Activated naive CD4-positive, alpha-beta T cell treated with anti-CD3 and anti-CD28 coated beads for 36 hours (primary cell): ENCODE measurements at regions of chr6 and their contacts with region 1.

Region 1: GRCh38 chr6:15184441-15184861 is 61.4 kb upstream of the JARID2 start:
- DNase-seq: peak; percentile 78
- H3K4me3 Mint-ChIP-seq: no peak overlapping the region
- H3K27ac Mint-ChIP-seq: peak overlapping the region; percentile 99
- H3K4me1 Mint-ChIP-seq: peaks cover 25% of the 10 kb centered on the region
- H3K27me3 Mint-ChIP-seq: no peaks in the 10 kb centered on the region

Region 2: DNA sequence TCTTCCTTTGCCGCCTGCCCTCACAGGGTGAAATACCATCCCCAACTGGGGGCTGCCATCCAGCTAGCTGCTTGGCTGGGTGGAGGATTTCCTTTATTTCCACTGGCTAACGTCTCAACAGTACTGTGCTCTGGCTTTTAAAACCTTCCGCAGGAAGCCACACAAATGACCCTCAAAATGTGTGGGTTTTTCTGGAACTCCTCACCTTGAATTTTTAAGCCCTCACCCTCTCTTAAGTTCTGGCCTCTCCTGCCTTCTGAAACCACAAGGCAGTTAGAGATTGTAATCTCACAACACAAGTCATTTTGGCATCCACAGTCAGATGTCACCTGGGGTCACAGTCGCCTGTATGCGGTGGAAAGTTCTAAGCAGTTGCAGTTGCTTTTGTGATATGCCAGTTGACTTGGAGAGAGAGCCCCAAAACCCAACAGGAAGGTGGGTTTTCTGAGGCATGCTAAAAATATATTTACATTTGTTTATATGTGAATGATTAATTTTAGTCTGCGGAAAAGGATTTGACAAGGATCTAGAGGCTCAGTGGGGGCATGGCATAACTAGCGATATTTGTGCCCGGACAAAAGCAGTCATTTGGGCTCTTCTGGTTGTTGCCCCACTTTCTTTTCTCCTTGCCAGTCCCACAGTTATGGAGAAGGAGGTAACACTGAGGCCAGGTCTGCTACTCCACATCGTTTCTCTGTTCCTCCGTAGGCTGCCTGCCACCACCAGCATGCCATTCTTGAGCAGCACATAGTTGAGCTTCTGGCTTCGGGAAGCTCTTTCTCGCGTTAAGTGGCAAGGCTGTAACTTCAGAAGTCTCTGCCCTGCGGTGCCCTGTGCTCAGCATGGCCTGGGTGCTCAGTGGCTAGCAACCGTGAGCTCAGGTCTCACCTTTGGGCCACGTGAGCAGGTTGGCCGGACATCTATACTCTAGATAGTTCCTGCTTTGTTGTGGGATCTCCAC is 731.6 kb before region 1 on chr6:
- CTCF ChIA-PET with region 1: no interaction called
- intact Hi-C with region 1: loop called (anchors 1 kb)
- DNase-seq: peak; percentile 79
- H3K4me3 Mint-ChIP-seq: no peak overlapping the region
- H3K27ac Mint-ChIP-seq: no peak overlapping the region
- H3K4me1 Mint-ChIP-seq: peaks cover 53% of the 10 kb centered on the region
- H3K27me3 Mint-ChIP-seq: peaks cover 1% of the 10 kb centered on the region

Region 3: DNA sequence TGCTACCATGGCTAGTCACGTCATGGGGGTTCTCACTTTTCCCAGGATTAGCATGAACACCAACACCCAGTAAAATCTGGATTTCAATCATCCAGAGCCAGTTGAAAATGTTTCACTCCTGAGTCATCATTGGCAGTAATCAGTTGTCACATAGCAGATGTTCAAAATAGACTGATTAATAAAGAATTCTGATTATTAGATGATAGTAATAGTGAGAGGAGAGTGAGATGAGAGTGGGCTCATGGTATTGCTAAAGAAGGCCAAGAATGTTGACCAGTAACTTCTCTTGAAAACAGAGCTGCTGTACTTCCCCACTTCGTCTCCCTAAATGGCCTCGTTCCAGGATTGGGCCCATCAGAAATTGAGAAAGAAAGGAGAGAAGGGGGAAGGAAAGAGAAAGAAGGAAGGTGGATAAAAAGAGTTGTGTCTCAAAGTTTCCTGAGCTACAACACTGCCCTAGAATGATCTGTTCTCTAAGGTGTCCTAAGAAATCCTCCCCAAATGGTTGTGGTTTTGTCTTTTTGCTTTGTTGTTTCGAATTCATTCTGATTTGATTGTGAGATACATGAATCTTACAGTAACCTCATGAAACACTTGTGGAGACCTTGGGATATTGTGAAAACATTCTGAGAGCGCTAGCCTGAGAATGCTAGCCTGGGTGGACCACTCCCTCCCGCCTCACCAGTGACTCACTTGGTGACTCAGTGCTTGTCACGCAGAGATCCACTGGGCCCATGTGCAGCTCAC is 440.8 kb before region 1 on chr6:
- CTCF ChIA-PET with region 1: no interaction called
- intact Hi-C with region 1: loop called (anchors 1 kb)
- DNase-seq: peak; percentile 92
- H3K4me3 Mint-ChIP-seq: no peak overlapping the region
- H3K27ac Mint-ChIP-seq: peak overlapping the region; percentile 98
- H3K4me1 Mint-ChIP-seq: peaks cover 69% of the 10 kb centered on the region
- H3K27me3 Mint-ChIP-seq: no peaks in the 10 kb centered on the region

Region 4: GRCh38 chr6:14975471-14975817 is 209.0 kb before region 1 on chr6:
- CTCF ChIA-PET with region 1: no interaction called
- intact Hi-C with region 1: no loop called
- DNase-seq: peak; percentile 11
- H3K4me3 Mint-ChIP-seq: no peak overlapping the region
- H3K27ac Mint-ChIP-seq: no peak overlapping the region
- H3K4me1 Mint-ChIP-seq: peaks cover 5% of the 10 kb centered on the region
- H3K27me3 Mint-ChIP-seq: no peaks in the 10 kb centered on the region

Region 5: GRCh38 chr6:15299430-15300131 is 115.1 kb after region 1 on chr6:
- CTCF ChIA-PET with region 1: no interaction called
- intact Hi-C with region 1: loop called (anchors 5 kb)
- DNase-seq: peak; percentile 36
- H3K4me3 Mint-ChIP-seq: no peak overlapping the region
- H3K27ac Mint-ChIP-seq: no peak overlapping the region
- H3K4me1 Mint-ChIP-seq: peaks cover 82% of the 10 kb centered on the region
- H3K27me3 Mint-ChIP-seq: no peaks in the 10 kb centered on the region

Region 6: GRCh38 chr6:15441215-15441868 is 256.9 kb after region 1 on chr6:
- CTCF ChIA-PET with region 1: no interaction called
- intact Hi-C with region 1: loop called (anchors 5 kb)
- DNase-seq: peak; percentile 60
- H3K4me3 Mint-ChIP-seq: no peak overlapping the region
- H3K27ac Mint-ChIP-seq: no peak overlapping the region
- H3K4me1 Mint-ChIP-seq: peaks cover 57% of the 10 kb centered on the region
- H3K27me3 Mint-ChIP-seq: no peaks in the 10 kb centered on the region